ENCODE measurements at regions of chr13 and their contacts with region 1.

Region 1: DNA sequence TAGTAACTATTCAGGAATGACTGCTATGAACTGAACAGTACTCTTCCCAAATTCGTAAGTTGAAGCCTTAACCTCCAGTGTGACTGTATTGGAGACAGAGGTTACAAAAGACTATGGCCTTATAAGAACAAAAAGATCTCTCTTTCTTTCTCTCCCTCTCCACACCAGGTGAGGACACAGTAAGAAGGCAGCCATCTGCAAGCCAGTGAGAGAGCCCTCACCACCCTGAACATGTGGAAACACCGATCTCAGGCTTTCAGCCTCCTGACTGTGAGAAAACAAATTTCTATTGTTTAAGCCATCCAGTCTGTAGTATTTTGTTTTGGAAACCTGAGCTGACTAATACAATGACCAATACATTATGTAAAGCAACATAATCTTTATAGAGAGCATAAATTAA is 888.9 kb downstream of the SLITRK1 start:
- DNase-seq: no peak
- H3K4me3 ChIP-seq: no peak overlapping the region
- H3K27ac ChIP-seq: no peak overlapping the region
- H3K4me1 ChIP-seq: no peaks in the 10 kb centered on the region
- H3K27me3 ChIP-seq: no peaks in the 10 kb centered on the region
- CTCF ChIP-seq: no peak
- EP300 ChIP-seq: no peak
- POLR2A ChIP-seq: no peak

Region 2: DNA sequence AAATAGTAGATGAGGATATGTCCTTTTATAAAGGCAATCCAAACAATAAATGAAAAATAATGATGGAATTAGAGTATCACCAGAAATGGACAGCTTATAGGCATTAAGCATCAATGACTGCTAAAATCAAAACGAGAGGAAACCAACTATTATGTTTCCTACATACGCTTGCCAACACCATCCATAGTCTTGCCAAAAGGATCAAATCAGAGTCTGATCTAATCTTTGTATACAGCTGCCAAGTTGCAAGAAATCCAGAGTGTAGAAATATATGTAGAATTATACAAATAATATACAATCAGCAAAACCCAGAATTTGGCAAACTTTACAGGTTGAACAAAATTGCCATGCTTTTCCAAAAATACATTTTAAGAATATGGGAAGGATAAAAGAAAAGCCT is 772.8 kb before region 1 on chr13:
- intact Hi-C with region 1: loop called (anchors 10 kb)
- DNase-seq: no peak
- H3K4me3 ChIP-seq: no peak overlapping the region
- H3K27ac ChIP-seq: no peak overlapping the region
- H3K4me1 ChIP-seq: no peaks in the 10 kb centered on the region
- H3K27me3 ChIP-seq: no peaks in the 10 kb centered on the region
- CTCF ChIP-seq: no peak
- EP300 ChIP-seq: no peak
- POLR2A ChIP-seq: no peak

Region 3: GRCh38 chr13:82654866-82655855 is 338.3 kb before region 1 on chr13:
- intact Hi-C with region 1: no loop called
- DNase-seq: peak; percentile 89
- H3K4me3 ChIP-seq: no peak overlapping the region
- H3K27ac ChIP-seq: peak overlapping the region in 1 of 4 donors; percentile 34
- H3K4me1 ChIP-seq: no peaks in the 10 kb centered on the region
- H3K27me3 ChIP-seq: no peaks in the 10 kb centered on the region
- CTCF ChIP-seq: no peak
- EP300 ChIP-seq: no peak
- POLR2A ChIP-seq: no peak

Region 4: DNA sequence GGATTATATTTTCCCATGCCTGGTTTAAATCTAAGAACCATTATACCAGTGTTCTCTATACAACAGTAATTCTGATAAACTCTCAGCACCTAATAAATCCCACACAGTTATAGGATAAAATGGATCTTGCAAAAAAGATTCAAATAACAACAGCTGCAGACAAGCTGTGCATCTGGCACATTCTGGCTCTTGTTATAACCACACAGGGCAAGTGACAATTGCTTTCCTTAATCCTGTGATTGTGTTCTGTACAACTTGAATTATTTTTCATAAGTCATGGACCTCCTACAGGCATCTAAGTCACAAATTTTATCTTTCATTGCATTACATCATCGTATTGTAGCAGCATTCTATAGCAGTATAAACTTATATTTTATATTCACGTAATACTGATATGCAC is 59.4 kb before region 1 on chr13:
- intact Hi-C with region 1: no loop called
- DNase-seq: no peak
- H3K4me3 ChIP-seq: no peak overlapping the region
- H3K27ac ChIP-seq: no peak overlapping the region
- H3K4me1 ChIP-seq: peaks cover 0 to 11% (median 7%) of the 10 kb centered on the region in 4 donors
- H3K27me3 ChIP-seq: no peaks in the 10 kb centered on the region
- CTCF ChIP-seq: no peak
- EP300 ChIP-seq: no peak
- POLR2A ChIP-seq: no peak

Measured in sigmoid colon (tissue), 7 donors.